Activated naive CD8-positive, alpha-beta T cell treated with anti-CD3 and anti-CD28 coated beads, Interleukin-2, amount 10 ng/mL, durations not matched to agents 7 days and 5 days (primary cell): ENCODE measurements at regions of chr19 and their contacts with region 1.

Region 1: GRCh38 chr19:57746580-57747471 is at the start of gene ZNF776:
- DNase-seq: peak; percentile 75
- ATAC-seq: peak; percentile 96
- H3K4me3 Mint-ChIP-seq: peak within 1 kb of the TSS; percentile 99
- H3K27ac Mint-ChIP-seq: peak within 1 kb of the TSS; percentile 97
- H3K4me1 Mint-ChIP-seq: peaks cover 15% of the 10 kb centered on the region
- H3K27me3 Mint-ChIP-seq: no peaks in the 10 kb centered on the region
- total RNA-seq, gene ZNF776: 27.9 to 29.0 TPM

Region 2: DNA sequence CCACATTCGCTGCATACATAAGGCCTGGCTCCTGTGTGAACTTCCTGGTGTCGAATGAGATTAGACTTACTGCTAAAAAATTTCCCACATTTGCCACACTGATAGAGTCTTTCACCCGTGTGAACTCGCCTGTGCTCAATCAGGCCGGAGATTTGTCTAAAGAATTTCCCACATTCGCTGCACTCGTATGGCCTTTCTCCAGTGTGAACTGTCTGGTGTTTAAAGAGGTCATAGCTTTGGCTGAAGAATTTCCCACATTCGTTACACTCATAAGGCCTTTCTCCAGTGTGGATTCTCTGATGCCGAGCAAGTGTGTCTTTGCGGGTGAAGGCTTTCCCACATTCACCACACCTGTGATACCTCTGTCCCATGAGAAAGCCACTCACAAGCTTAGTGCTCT is 25.9 kb before region 1 on chr19:
- POLR2A ChIA-PET with region 1: interaction called, 20 read pairs
- DNase-seq: no peak
- ATAC-seq: no peak
- H3K4me3 Mint-ChIP-seq: no peak overlapping the region
- H3K27ac Mint-ChIP-seq: no peak overlapping the region
- H3K4me1 Mint-ChIP-seq: peaks cover 8% of the 10 kb centered on the region
- H3K27me3 Mint-ChIP-seq: no peaks in the 10 kb centered on the region

Region 3: DNA sequence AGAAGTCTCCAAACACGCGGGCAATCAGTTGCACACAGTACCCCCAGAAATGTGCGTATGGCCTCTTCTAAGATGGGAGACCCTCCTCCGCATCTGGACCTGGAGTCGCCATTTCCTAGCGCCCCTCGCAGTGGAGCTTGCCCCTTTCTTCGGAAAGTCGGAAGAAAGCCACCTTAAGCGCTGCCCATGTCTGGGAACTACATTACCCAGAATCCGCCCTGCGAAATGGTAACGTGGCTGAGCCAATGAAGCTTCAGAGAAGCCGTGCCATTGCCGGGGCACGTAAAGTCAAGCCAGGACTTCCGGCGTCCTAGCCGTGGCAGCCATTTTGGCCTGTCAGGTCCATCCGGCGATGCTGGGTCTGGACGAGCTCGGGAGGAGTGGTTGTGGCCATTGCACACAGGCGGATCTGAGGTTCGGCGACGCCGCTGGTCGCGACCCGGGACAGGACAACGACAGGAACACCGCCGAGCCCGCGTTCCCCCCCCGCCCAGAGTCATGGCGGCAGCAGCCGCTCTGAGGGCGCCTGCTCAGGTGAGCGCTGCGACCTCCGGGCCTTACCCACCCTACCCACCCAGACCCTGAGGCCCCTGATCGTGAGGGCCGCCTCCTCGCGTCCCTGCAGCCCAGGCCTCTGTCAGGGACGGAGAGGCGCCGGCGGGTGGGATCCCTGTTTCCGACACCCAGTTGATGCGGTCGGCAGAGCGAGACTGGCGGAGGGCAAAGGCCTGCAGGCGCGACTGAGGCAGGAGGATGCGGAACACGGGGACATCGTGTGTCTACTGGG is 22.7 kb after region 1 on chr19 and contains the start of gene ZNF586:
- POLR2A ChIA-PET with region 1: interaction called, 18 read pairs
- DNase-seq: peak; percentile 84
- ATAC-seq: peak; percentile 98
- H3K4me3 Mint-ChIP-seq: peak within 1 kb of the TSS; percentile 93
- H3K27ac Mint-ChIP-seq: peak within 1 kb of the TSS; percentile 93
- H3K4me1 Mint-ChIP-seq: peaks cover 26% of the 10 kb centered on the region
- H3K27me3 Mint-ChIP-seq: no peaks in the 10 kb centered on the region
- total RNA-seq, gene ZNF586: 29.0 to 29.2 TPM

Region 4: DNA sequence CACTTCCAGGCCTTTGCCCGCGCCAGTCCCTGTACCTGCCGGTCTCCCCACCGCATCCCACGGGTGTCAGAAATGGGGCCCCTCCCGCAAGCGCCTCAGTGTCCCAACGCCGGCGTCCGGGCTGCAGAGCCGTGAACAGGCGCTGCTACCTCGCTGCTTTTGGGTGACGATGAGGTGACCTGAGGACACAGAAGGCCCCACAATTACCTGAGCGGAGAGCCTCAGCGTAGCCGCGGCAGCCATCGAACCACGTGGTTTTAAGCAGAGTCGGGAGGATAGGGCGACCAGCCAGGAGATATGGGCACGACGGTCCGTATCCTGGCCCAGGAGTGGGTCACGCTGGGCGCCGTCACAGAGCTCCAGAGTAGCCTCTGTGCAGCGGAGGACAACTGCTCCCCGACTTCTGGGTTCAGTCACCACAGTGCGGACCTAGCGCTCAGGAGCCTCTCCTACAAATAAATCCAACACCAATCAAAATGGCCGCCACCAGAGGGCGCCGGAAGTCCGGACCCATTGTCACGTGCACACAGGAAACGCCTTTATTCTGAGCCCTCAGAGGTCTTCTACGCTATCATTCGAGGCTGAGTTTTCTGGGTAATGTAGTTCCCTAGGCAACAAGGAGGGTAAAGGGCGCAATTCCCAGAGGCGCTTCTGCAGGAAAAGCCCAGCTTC is 141.9 kb after region 1 on chr19 and contains the start of gene ZNF814:
- POLR2A ChIA-PET with region 1: interaction called, 12 read pairs
- DNase-seq: peak; percentile 87
- ATAC-seq: peak; percentile 89
- H3K4me3 Mint-ChIP-seq: peak within 1 kb of the TSS; percentile 93
- H3K27ac Mint-ChIP-seq: peak within 1 kb of the TSS; percentile 89
- H3K4me1 Mint-ChIP-seq: peaks cover 18% of the 10 kb centered on the region
- H3K27me3 Mint-ChIP-seq: no peaks in the 10 kb centered on the region
- total RNA-seq, gene ZNF814: 38.4 to 43.3 TPM